ENCODE measurements at regions of chr9 and their contacts with region 1.

Region 1: GRCh38 chr9:33272061-33272460 is 7.2 kb downstream of the CHMP5 start:
- DNase-seq: no peak
- ATAC-seq: no peak
- H3K4me3 ChIP-seq: no peak overlapping the region
- H3K27ac ChIP-seq: no peak overlapping the region
- H3K4me1 ChIP-seq: no peaks in the 10 kb centered on the region; the same call in 1 of the 2 replicates
- H3K27me3 ChIP-seq: no peaks in the 10 kb centered on the region
- CTCF ChIP-seq: no peak
- EP300 ChIP-seq: no peak
- POLR2A ChIP-seq: no peak
- RAD21 ChIP-seq: no peak

Region 2: DNA sequence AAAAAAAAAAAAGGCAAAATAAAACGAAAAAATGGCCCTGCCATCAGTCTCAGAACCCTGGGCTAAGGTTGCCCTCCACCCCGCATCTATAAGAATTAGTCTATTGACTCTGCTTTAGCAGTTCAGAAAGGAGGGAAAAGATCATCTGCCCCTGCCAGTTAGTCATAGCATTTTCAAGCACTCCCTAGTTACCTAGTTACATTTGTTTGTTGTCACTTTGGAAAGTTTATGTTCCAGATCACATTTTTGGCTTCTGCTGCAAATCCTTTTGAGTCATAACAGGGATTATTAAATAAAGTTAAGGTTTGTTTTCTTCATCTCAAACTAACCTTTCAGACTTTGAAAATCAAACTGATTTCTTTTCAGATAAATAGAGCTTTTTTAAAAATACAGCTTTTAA is 78.2 kb after region 1 on chr9:
- CTCF ChIA-PET with region 1: no interaction called
- POLR2A ChIA-PET with region 1: interaction called, 11 read pairs
- RAD21 ChIA-PET with region 1: no interaction called
- SMC1A ChIA-PET with region 1: interaction called, 3 read pairs
- in situ Hi-C with region 1: no loop called
- intact Hi-C with region 1: no loop called
- DNase-seq: no peak
- ATAC-seq: no peak
- H3K4me3 ChIP-seq: no peak overlapping the region
- H3K27ac ChIP-seq: no peak overlapping the region
- H3K4me1 ChIP-seq: no peaks in the 10 kb centered on the region
- H3K27me3 ChIP-seq: no peaks in the 10 kb centered on the region
- CTCF ChIP-seq: no peak
- EP300 ChIP-seq: no peak
- POLR2A ChIP-seq: no peak
- RAD21 ChIP-seq: no peak

Measured in GM12878 (cell line).